ENCODE measurements at regions of chr6 and their contacts with region 1.

Region 1: DNA sequence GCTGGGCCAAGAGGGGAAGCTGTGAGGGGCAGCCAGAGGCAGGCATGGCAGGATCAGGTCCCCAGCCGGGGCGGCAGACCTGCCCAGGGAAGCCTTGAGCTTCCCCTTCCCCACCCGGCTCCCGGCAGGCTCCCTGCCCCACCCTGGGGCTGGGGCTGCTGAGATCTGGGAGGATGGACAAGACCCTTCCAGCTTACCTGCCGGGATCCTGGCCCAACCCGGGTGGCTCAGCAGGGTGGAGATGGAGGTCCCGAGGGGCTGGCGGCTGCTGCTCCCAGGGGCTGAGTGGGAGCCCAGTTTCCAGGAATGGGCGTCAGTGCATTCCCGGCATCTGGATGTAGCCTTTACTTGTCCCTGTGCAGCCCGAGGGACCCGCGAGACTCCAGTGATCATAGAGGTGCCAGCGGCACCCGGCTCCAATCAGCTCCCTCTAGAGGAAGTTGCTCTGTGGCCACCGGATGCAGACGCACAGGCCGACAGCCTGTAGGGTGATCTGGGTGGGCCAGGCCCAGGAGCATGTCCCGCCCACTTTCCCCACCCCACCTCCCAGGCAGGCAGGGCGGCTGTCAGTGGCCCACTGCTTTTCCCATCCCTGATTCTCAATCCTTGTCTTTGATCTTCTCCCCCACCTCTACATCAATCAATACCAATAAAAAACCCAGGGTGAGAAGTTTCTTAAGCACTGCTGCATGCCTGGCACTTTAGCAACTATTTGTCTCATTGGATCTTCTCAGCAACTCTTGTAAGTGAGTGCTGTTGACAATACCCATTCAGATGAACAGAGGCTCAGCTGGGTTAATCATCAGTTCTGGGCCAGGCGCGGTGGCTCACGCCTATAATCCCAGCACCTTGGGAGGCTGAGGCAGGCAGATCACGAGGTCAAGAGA is at the start of gene BAK1:
- DNase-seq: peak; percentile 93
- ATAC-seq: peak; percentile 96
- total RNA-seq, gene BAK1: 17.6 to 21.6 TPM

Region 2: GRCh38 chr6:32785781-32786533 is 794.1 kb before region 1 on chr6:
- intact Hi-C with region 1: no loop called
- DNase-seq: no peak
- ATAC-seq: peak; percentile 86 to 90

Region 3: GRCh38 chr6:33439956-33440648 is 140.0 kb before region 1 on chr6:
- intact Hi-C with region 1: no loop called
- DNase-seq: no peak
- ATAC-seq: no peak

Region 4: DNA sequence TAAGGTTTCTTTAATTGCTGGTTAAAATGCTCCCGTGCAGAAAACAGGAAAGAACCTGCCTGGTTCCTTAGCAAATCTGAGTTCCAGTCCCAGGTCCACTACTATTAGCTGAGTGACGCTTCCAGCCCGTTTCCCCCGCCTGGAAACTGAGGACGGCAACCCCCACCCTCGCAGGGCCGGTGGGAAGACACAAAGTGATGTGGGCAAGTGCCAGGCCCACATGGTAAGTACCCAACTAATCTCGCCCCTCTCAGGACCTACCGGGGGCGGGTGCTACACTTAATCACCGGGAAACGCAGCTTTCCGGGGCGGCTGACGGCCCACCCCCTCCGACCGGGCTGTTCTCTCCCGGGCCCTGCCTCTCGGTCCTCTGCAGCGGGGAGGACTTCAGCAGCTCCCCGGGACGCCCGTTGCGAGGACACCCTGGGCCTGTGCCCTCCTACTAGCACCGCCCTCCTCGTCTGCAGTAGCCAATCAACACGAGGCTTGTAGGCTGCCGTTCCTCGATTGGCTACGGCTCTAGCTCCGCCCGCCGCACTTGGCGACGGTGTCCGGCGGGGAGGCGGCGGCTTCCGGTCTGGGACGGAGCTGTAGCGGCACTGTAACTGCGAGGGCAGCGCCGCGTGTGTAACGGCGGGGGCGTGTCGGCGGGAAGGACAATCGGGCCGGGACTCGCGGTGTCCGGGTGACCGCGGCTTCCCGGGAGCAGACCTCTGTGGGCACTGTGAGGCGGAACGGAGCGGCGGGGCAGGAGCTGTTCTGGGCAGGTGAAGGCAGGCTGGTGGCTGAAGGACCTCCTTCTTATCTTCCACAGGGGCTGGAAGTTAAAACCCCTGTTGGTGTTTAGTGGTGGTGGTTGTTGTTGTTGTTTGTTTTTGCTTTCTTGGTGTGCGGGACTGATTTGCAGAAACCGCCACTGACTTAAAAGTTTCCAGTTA is 125.8 kb before region 1 on chr6 and contains the start of gene ZBTB9:
- intact Hi-C with region 1: loop called in 1 of 2 experiments (anchors 10 kb)
- DNase-seq: peak; percentile 97
- ATAC-seq: peak; percentile 98 to 99
- total RNA-seq, gene ZBTB9: 4.4 to 5.9 TPM

Region 5: DNA sequence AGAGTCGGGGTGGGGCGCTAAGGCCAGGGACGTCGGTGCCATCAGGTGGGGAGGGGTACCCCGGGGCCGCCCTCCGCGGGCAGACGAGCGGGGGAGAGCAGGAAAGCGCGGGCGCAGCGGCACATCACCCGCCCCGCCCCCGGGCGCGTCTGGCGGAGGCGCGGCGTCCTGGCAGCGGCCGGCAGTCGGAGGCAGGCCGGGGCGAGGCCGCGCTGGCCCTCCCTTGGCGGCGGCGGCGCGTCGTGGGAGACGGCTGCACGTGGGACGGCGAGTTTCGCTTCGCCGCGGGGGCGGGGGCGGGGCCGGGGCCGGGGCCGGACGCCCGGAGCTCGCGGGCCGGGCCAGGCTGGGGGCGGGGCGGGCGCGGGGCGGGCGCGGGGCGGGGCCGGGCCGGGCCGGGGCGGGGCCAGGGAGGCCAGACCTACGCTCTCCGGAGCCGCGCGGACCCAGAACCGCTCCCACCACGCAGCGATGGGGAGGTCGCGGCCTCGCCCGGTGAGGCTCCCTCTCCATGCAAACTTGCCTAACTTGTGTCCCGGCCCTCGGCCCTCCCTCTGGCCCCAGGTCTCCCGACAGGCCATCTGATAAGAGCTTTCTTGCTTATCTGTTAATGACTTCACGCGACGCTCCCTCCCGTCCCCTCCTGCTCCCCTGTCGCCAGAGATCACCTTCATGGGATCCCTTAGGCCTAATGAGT is 53.5 kb after region 1 on chr6:
- intact Hi-C with region 1: loop called in 1 of 2 experiments (anchors 10 kb)
- DNase-seq: peak; percentile 81
- ATAC-seq: peak; percentile 86 to 90

Region 6: DNA sequence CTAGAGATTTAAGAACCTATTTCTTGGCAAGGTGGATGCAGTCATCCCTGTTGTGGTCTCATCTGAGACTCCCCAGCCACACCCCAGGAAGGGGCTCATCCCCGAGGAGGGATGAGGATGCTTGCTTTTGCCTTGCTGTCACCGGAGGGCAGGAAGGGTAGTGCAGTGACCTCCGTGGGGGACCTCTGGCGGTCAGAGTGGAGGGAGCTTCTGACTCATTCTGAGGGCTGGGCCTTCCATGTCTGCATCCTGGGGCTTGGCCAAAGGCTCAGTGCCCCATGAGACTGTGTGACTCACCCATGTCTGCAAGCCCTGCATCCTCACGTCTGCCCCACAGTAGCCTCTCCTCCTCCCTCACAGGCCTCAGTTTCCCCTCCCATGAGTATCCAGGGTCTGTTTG is 92.7 kb after region 1 on chr6:
- intact Hi-C with region 1: loop called in 1 of 2 experiments (anchors 10 kb)
- DNase-seq: peak; percentile 92
- ATAC-seq: peak; percentile 92 to 95

Region 7: DNA sequence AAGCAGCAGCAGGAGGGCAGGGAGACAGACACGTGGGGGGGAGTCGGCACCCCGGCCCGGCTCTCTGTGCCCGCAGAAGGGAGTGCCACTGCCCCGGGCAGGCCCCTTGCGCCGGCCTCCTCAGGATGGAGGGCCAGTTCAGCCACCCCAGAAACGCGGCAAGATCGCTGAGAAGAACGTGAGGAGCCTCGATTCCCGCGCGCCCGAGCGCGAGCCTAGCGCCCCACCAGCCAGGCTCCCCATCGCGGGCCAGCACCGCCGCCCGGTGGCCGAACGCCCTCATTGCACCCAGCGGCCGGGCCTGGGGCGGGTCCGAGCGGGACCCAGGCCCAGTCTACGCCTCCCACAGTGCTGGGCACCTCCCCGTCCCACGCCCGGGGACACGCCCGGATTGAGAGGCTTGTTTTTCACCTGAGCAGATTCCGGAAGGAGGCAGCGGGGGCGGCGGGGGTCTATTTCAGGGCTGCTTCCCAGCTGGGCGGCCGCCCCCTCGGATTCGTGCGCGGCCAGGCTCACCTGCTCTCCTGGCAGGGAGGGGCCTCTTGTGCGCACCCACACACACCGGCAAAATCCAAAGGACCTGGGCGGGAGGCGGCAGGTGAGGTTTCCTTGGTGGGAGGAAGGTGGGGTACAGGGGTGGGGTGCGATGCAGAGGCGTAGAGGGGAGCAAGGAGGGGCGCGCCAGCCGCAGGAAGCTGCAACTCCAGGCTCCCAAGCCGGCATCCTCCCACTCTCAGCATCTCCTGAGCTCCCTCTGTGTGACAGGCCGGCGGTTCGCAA is 574.8 kb after region 1 on chr6:
- intact Hi-C with region 1: loop called in 1 of 2 experiments (anchors 10 kb)
- DNase-seq: peak; percentile 61
- ATAC-seq: peak; percentile 85 to 87

Measured in left cardiac atrium (tissue), 4 donors.